Right cardiac atrium (tissue), 5 donors: ENCODE measurements at regions of chr9 and their contacts with region 1.

Region 1: DNA sequence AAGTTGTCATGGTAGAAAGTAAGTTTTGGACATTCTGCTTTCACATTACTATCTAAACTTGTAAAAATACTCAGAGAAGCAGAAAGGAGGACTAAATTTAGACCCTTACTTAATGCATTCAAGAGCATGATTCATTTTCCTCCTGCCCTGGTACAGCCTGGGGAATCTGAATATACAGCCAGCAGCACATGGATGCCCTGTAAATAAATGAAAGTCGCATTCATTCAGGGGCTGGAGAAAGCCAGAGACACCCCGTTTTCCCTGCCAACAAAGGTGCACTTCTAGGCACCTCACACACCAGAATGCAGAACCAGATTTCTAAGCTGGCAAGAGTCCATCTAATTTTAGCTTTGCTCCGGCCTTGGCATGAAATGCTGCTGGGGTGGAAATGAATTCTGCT is 172.7 kb upstream of the KLF9 start:
- DNase-seq: no peak
- ATAC-seq: peak; percentile 69 to 75
- H3K4me3 ChIP-seq: no peak overlapping the region
- H3K27ac ChIP-seq: peak overlapping the region; percentile 94
- H3K4me1 ChIP-seq: peaks cover 12% of the 10 kb centered on the region
- H3K27me3 ChIP-seq: no peaks in the 10 kb centered on the region

Region 2: DNA sequence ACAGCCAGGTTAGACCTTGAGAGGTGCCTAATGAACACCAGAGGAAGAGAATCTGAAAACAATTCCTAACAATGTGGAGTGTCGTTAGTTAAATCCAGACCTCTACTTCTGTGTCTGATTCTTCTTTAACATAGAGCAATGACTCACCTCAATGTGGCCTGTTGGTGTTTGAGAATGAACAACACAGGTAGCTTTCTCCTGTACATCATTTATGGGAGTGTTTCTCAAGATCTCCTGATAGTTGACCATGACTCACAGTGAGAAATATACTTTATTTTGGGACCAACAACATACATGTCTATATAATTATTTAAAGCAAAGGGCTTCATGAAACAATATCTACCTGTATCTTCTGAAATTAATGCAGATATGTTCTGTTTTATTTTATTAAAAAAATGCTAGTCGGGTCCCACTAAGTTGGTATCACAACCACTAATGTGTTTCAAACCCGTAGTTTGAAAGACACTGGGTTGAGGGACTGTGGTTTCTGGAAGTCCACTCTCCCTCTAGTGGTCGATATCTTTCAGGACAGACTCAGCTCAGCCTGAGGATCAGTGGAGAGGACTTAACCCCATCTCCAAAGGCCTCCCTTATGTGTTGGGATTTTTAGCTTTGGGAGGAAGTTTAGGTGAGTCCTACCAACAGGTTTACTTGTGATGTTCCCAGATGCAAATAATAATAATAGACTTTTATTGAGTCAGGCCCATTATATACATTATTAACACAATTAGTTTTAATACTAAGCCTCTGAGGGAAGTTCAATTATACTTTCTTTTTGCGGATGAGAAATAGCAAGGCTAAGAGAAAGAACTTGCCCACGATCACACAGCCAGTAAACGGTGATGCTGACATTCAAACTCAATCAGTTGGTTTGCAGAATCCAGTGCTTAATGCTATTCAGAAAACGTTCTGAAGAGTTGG is 102.7 kb before region 1 on chr9:
- intact Hi-C with region 1: loop called in 2 of 4 experiments (anchors 5 kb)
- DNase-seq: no peak
- ATAC-seq: peak; percentile 59 to 75
- H3K4me3 ChIP-seq: no peak overlapping the region
- H3K27ac ChIP-seq: peak overlapping the region; percentile 74
- H3K4me1 ChIP-seq: peaks cover 35% of the 10 kb centered on the region
- H3K27me3 ChIP-seq: no peaks in the 10 kb centered on the region

Region 3: DNA sequence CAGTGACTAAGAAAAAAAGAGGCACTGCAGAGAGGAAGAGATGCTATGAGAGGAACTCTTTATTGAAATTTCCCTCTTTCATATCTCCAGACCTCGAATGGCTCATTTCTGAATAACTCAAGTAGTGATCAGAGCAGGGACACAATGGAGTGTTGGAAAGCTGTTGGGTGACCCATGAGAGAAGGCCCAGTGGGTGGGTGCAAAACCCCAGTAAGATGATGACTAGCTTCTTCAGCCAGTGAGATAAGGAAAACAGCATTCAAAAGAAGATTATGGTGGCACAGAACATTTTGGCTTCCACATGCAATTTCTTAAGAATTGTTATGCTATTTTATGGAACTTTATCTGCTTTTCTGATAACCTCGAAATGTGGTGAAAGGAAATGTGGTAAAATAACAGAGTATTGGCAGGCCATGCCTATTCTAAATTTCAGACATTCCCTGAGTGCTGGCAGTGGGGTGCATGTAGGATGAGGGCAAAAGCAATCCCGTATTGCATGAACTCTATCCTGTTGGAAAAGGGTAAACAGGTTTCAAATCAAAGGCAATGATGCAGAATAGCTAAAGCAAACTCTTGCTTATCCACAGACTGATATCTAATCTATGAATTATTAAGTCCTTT is 44.8 kb before region 1 on chr9:
- intact Hi-C with region 1: loop called in 1 of 4 experiments (anchors 10 kb)
- DNase-seq: peak in 1 of 3 donors; percentile 57
- ATAC-seq: peak; percentile 75 to 87
- H3K4me3 ChIP-seq: no peak overlapping the region
- H3K27ac ChIP-seq: no peak overlapping the region
- H3K4me1 ChIP-seq: peaks cover 4% of the 10 kb centered on the region
- H3K27me3 ChIP-seq: no peaks in the 10 kb centered on the region